Activated T-helper 2 cell treated with anti-CD3 and anti-CD28 coated beads, Interferon-gamma antibody, Interleukin-2, Interleukin-4, amounts not matched to agents 10 μg/mL and 5 μg/mL and 100 μg/mL, durations not matched to agents 14 hours and 24 hours and 36 hours (primary cell): ENCODE measurements at regions of chr7 and their contacts with region 1.

Region 1: GRCh38 chr7:139680676-139681462 is 96.9 kb downstream of the HIPK2 start:
- DNase-seq: peak; percentile 67
- H3K4me3 Mint-ChIP-seq: peak overlapping the region; percentile 27
- H3K27ac Mint-ChIP-seq: peak overlapping the region; percentile 92
- H3K4me1 Mint-ChIP-seq: peaks cover 61% of the 10 kb centered on the region
- H3K27me3 Mint-ChIP-seq: no peaks in the 10 kb centered on the region

Region 2: GRCh38 chr7:139075031-139075652 is 605.7 kb before region 1 on chr7:
- intact Hi-C with region 1: no loop called
- DNase-seq: peak; percentile 57
- H3K4me3 Mint-ChIP-seq: peak overlapping the region; percentile 13
- H3K27ac Mint-ChIP-seq: peak overlapping the region; percentile 78
- H3K4me1 Mint-ChIP-seq: peaks cover 52% of the 10 kb centered on the region
- H3K27me3 Mint-ChIP-seq: no peaks in the 10 kb centered on the region

Region 3: DNA sequence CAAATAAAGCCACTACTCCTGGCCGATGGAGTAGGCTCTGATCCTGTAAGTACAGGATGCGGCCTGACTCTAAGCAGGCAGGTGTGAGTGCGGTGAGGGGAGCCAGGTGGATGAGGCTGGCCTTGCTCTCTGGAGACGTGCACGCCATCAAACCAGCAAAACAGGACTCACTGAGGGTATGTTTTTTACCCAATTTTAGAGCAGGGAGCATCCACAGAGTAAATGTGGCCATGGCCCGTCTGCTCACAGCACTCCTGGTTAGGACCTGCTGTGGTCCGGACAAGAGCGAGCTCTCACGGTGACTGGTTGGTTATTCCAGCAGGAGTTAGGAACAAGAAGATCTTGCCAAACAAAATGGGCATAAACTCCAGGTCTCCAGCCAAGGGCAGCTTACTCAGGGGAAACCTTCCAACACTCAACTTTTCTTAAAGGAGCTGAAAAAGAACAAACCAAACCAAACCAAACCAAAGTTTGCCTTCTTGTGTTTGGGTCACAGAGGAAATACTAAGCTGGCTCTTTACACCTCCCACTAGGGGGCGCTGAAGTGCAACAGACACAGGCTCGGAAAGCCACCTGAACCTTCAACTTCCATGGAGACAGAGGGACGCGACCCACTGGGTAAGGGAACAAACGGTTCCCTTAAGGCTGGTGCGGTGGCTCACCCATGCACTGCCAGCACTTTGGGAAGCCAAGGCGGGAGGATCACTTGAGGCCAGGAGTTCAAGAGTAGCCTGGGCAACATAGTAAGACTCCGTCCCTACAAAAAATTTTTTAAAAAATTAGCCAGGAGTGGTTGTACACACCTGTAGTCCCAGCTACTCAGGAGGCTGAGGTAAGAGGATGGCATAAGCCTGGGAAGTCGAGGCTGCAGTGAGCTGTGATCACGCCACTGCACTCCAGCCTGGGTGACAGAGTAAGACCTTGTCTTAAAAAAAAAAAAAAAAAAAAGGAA is 35.0 kb before region 1 on chr7:
- intact Hi-C with region 1: loop called (anchors 1 kb)
- DNase-seq: peak; percentile 69
- H3K4me3 Mint-ChIP-seq: no peak overlapping the region
- H3K27ac Mint-ChIP-seq: no peak overlapping the region
- H3K4me1 Mint-ChIP-seq: peaks cover 44% of the 10 kb centered on the region
- H3K27me3 Mint-ChIP-seq: no peaks in the 10 kb centered on the region

Region 4: DNA sequence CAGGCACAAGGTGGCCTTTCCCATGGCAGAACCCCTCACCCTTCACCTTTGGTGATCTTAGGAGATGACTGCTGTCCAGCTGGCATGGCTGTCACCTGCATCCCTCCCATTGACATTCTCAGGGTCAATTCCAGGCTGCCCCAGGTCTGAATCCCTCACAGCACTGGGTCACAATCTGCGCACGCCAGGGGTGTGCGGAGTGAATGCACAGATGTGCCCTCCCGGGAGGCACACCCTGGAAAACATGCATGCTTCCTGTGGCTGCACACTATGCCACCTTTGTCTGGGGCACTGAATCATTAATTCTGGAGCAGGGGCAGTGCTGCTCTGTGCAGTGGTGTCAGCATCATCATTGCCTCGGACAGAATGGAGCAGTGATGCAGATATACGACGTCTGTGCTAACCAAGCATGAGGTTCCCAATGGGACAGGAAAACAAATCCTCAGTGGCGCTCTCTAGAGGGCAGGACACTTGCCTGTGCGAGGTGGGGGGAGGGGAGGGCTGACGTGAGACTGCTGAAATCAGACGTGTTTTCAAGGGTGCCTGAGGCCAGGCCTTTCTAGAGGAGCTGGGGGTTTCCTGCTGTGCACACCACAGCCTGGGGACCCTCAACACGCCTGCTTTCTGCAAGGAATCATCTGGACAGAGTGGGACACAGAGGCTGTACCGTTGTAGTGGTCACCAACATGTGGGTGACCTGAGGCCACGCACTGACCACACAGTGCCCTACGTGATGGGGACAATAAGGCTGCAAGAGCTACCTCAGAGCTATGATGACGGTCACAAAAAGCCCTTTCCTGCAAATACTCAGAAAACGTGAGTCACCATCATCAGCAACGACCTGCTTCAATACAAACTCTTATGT is 19.0 kb after region 1 on chr7:
- intact Hi-C with region 1: loop called (anchors 1 kb)
- DNase-seq: no peak
- H3K4me3 Mint-ChIP-seq: no peak overlapping the region
- H3K27ac Mint-ChIP-seq: peak overlapping the region; percentile 83
- H3K4me1 Mint-ChIP-seq: peaks cover 32% of the 10 kb centered on the region
- H3K27me3 Mint-ChIP-seq: no peaks in the 10 kb centered on the region

Region 5: DNA sequence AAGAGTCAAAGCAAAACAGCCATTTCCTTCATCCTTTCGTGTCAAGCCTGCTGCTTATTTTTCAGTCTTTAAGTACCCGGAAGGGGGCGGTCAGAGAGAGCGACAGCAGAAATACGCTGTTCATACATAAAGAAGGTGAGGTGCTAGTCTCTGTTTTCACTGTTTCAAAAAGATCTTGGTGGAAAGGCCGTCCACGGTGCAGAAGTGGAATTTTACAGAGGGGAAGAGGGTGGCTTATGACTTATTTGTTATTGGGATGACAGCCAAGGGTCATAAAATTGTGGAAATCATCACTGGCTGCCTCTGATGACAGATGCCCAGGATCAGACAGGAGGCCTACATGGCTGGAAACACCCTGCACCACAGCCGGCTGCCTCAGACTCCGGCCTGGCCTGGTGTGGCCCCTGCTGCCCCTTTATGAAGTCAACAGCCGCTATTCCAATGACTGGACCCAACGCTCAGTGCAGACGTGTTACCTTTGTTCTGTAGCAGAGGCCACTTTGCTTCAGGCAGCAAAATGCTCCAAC is 39.9 kb after region 1 on chr7:
- intact Hi-C with region 1: loop called (anchors 5 kb)
- DNase-seq: no peak
- H3K4me3 Mint-ChIP-seq: no peak overlapping the region
- H3K27ac Mint-ChIP-seq: no peak overlapping the region
- H3K4me1 Mint-ChIP-seq: peaks cover 14% of the 10 kb centered on the region
- H3K27me3 Mint-ChIP-seq: no peaks in the 10 kb centered on the region

Region 6: GRCh38 chr7:139731802-139732470 is 51.1 kb after region 1 on chr7:
- intact Hi-C with region 1: loop called (anchors 2 kb)
- DNase-seq: no peak
- H3K4me3 Mint-ChIP-seq: peak overlapping the region; percentile 46
- H3K27ac Mint-ChIP-seq: peak overlapping the region; percentile 66
- H3K4me1 Mint-ChIP-seq: peaks cover 43% of the 10 kb centered on the region
- H3K27me3 Mint-ChIP-seq: no peaks in the 10 kb centered on the region

Region 7: GRCh38 chr7:140439359-140439758 is 758.5 kb after region 1 on chr7:
- intact Hi-C with region 1: no loop called
- DNase-seq: no peak
- H3K4me3 Mint-ChIP-seq: no peak overlapping the region
- H3K27ac Mint-ChIP-seq: peak overlapping the region; percentile 58
- H3K4me1 Mint-ChIP-seq: peaks cover 9% of the 10 kb centered on the region
- H3K27me3 Mint-ChIP-seq: no peaks in the 10 kb centered on the region